Activated T-helper 2 cell treated with anti-CD3 and anti-CD28 coated beads, Interferon-gamma antibody, Interleukin-2, Interleukin-4, amounts not matched to agents 10 μg/mL and 5 μg/mL and 100 μg/mL, durations not matched to agents 14 hours and 24 hours and 36 hours (primary cell): ENCODE measurements at regions of chr4 and their contacts with region 1.

Region 1: GRCh38 chr4:162497564-162498167 is 333.9 kb upstream of the FSTL5 start:
- DNase-seq: no peak
- H3K4me3 Mint-ChIP-seq: no peak overlapping the region
- H3K27ac Mint-ChIP-seq: no peak overlapping the region
- H3K4me1 Mint-ChIP-seq: no peaks in the 10 kb centered on the region
- H3K27me3 Mint-ChIP-seq: no peaks in the 10 kb centered on the region

Region 2: DNA sequence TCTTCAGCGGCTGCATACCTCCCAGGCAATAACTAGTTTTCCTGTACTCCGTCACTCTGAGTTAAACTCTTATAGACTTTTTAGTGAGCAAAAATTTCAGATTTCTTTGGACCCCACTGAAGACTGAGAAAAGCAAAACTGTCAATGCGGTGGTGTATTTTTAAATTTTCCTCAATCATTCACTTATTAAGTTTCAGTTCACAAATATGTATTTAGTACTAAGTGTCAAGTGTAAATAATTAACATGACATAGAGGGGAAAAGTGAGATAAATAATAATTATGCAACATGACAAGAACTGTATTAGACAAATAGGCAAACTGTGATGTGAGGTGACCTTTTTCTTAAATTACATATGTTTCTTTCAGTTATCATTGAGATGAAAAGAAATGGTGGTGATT is 544.6 kb after region 1 on chr4:
- intact Hi-C with region 1: loop called (anchors 2 kb)
- DNase-seq: no peak
- H3K4me3 Mint-ChIP-seq: no peak overlapping the region
- H3K27ac Mint-ChIP-seq: no peak overlapping the region
- H3K4me1 Mint-ChIP-seq: no peaks in the 10 kb centered on the region
- H3K27me3 Mint-ChIP-seq: no peaks in the 10 kb centered on the region